Lower leg skin (tissue), 4 donors: ENCODE measurements at regions of chr2 and their contacts with region 1.

Region 1: DNA sequence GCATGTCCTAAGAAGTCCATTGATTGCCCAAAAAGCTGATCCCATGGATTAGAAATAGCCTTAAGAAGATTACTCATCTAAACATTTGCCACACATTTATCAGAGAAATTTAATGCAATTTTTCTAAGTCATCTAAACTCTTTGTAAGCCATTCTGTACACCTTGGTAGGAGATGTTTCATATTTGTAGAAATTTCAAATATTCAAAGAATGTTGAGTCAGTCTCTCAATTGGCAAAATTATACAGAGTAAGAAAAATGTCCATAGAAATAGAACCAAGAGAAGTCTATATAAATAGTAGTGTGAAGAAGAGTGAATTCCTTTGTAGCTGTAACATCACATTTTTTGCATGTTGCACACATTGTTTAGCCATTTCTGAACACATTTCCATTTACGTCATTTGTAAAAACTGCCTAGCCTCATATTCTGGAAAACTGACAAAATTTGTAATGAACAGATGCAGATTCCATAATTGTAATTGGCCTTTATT is 128.6 kb downstream of the MSTN start:
- DNase-seq: no peak
- H3K4me3 ChIP-seq: no peak overlapping the region
- CTCF ChIP-seq: no peak
- POLR2A ChIP-seq: no peak

Region 2: DNA sequence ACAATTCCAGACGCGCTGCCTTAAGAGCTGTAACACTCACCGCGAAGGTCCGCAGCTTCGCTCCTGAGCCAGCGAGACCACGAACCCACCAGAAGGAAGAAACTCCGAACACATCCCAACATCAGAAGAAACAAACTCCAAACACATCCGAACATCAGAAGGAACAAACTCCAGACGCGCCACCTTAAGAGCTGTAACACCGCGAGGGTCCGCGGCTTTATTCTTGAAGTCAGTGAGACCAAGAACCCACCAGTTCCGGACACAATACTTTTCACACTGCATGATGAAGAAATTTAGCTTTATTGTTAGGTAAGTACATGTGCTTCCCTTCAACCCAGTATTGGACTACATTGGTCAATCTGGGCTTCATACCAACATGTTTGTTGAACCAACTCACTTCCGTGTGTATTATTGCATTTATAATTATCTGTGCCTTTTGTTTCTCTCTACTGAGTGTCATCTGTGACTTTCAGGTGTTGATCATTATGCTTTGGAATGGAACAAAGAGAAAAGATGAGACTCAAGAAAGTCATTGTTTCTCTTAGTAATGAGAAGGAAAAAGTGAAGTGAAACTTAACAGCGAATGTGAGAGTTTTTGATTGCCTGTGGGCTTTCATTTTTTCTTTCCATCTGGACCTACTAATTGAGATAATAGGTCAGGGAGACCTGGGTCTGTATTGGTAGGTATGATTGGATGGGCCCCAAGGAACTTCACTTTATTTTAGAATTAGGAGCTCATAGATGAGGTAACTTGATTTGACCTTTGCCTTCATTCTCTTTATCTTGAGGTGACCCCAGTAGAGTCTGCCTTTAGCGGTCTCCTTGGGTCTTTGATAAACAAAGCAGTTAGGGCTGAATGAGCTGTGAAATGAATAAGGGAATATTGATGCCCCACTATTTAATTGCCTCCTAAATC is 1989.0 kb after region 1 on chr2:
- intact Hi-C with region 1: loop called (anchors 5 kb)
- DNase-seq: no peak
- H3K4me3 ChIP-seq: no peak overlapping the region
- CTCF ChIP-seq: no peak
- POLR2A ChIP-seq: no peak